ENCODE measurements at regions of chr2 and their contacts with region 1.

Region 1: GRCh38 chr2:85538486-85539360 is at the start of gene MAT2A:
- DNase-seq: peak; percentile 84 to 99
- H3K4me3 ChIP-seq: peak within 1 kb of the TSS; percentile 87 to 100 (median 98)
- H3K27ac ChIP-seq: peak within 1 kb of the TSS; percentile 100
- H3K4me1 ChIP-seq: peaks cover 2 to 7% (median 5%) of the 10 kb centered on the region in 4 experiments; a peak in 4 of 7 replicates
- H3K27me3 ChIP-seq: no peaks in the 10 kb centered on the region
- CTCF ChIP-seq: peak; percentile 70 to 87 (median 76)
- EP300 ChIP-seq: peak in 1 of 2 experiments; percentile 95; a peak in 2 of 3 replicates
- POLR2A ChIP-seq: peak; percentile 99
- RAD21 ChIP-seq: peak; percentile 47 to 63; a peak in 3 of 4 replicates
- total RNA-seq, gene MAT2A: 297 and 307 TPM in 2 replicates

Region 2: DNA sequence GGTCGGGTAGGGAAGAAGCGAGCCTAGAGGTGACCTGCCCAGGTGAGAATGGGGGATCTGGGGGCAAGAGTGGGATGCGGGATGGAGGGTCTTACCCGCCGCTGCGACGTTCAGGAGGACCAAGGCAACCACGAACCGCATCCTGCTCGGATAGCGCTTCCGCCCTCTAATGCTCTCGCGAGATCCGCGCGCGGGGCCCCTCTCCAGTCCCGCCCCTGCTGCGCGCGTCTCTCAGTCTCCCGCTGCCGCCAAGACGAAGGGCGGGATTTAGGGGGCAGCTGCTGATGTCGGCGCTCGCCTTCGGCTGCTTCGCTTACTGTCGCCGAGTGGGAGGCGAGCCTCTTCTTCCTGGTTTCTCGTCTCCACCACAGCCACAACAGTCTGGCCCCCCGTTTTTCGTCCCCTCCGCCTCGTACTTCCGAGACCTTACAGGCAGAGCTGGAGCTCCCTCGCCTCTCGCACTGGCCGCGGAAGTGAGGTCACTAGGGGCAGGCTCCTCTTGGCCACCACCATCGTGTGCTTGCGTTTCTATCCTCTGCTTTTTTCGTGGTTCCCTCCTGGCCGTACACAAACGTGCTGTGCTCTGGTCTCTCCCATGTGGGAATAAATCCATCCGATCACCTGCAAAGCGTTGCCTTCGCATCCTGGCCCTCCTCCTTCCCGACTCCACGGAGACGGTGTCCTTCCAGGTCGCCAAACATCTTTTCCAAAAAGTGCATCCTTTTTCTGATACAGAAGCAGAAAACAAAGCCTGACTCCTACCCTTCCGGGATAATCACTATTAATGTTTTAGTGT is 210.7 kb before region 1 on chr2 and contains the start of gene TGOLN2:
- CTCF ChIA-PET with region 1: no interaction called
- POLR2A ChIA-PET with region 1: interaction called, 23 read pairs
- DNase-seq: peak; percentile 58 to 94
- H3K4me3 ChIP-seq: peak within 1 kb of the TSS; percentile 61 to 96 (median 84)
- H3K27ac ChIP-seq: peak within 1 kb of the TSS; percentile 99
- H3K4me1 ChIP-seq: peaks cover 0 to 13% (median 7%) of the 10 kb centered on the region in 4 experiments; a peak in 6 of 7 replicates
- H3K27me3 ChIP-seq: no peaks in the 10 kb centered on the region; a peak in 1 of 7 replicates
- CTCF ChIP-seq: peak in 1 of 3 experiments; percentile 8; a peak in 2 of 4 replicates
- EP300 ChIP-seq: no peak
- POLR2A ChIP-seq: peak; percentile 99 to 100
- RAD21 ChIP-seq: no peak; a peak in 1 of 4 replicates
- total RNA-seq, gene TGOLN2: 36.3 and 38.9 TPM in 2 replicates

Region 3: GRCh38 chr2:85420536-85421259 is 118.0 kb before region 1 on chr2:
- CTCF ChIA-PET with region 1: interaction called, 84 read pairs
- POLR2A ChIA-PET with region 1: interaction called, 1,889 read pairs
- DNase-seq: peak in 1 of 2 experiments; percentile 100
- H3K4me3 ChIP-seq: no peak overlapping the region
- H3K27ac ChIP-seq: no peak overlapping the region
- H3K4me1 ChIP-seq: peaks cover 0 to 20% (median 13%) of the 10 kb centered on the region in 4 experiments; a peak in 6 of 7 replicates
- H3K27me3 ChIP-seq: no peaks in the 10 kb centered on the region; a peak in 1 of 7 replicates
- CTCF ChIP-seq: peak; percentile 96 to 100 (median 98)
- EP300 ChIP-seq: peak in 1 of 2 experiments; percentile 24; a peak in 1 of 3 replicates
- POLR2A ChIP-seq: no peak
- RAD21 ChIP-seq: peak; percentile 99 to 100

Region 4: GRCh38 chr2:85475799-85476490 is 62.8 kb before region 1 on chr2:
- CTCF ChIA-PET with region 1: interaction called, 4 read pairs
- POLR2A ChIA-PET with region 1: interaction called, 51 read pairs
- DNase-seq: no peak
- H3K4me3 ChIP-seq: no peak overlapping the region
- H3K27ac ChIP-seq: 0 out of 2 replicates have a peak overlapping the region, but pooled peaks have one; percentile 8
- H3K4me1 ChIP-seq: no peaks in the 10 kb centered on the region
- H3K27me3 ChIP-seq: no peaks in the 10 kb centered on the region
- CTCF ChIP-seq: no peak
- EP300 ChIP-seq: no peak
- POLR2A ChIP-seq: no peak
- RAD21 ChIP-seq: no peak

Region 5: DNA sequence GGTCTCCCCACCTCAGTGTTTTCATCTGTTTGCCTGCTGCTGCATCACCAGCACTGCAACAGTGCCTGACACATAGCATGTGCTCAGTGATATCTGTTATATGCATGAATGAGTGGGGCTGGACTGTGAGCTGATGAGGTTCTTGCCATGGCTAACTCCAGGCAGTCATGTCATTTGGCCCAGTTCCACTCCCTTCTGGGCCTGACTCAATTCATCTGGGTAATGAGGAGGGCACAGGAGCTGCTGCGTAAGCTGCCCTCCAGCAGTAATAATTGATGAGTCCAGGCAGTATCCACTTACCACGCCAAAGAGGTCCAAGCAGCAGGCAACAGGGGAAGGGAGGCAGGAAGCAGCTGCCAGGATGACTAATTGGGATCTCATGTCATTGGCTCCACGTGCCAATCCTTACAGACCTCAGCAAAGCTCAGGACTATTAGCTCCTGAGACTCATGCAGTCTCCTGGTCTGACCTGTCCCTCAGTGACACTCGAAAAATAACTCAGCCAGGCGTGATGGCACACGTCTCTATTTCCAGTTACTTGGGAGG is 33.9 kb before region 1 on chr2:
- CTCF ChIA-PET with region 1: interaction called, 4 read pairs
- POLR2A ChIA-PET with region 1: interaction called, 347 read pairs
- DNase-seq: no peak
- H3K4me3 ChIP-seq: no peak overlapping the region
- H3K27ac ChIP-seq: no peak overlapping the region
- H3K4me1 ChIP-seq: no peaks in the 10 kb centered on the region; a peak in 2 of 7 replicates
- H3K27me3 ChIP-seq: no peaks in the 10 kb centered on the region
- CTCF ChIP-seq: no peak
- EP300 ChIP-seq: no peak
- POLR2A ChIP-seq: no peak
- RAD21 ChIP-seq: no peak

Region 6: DNA sequence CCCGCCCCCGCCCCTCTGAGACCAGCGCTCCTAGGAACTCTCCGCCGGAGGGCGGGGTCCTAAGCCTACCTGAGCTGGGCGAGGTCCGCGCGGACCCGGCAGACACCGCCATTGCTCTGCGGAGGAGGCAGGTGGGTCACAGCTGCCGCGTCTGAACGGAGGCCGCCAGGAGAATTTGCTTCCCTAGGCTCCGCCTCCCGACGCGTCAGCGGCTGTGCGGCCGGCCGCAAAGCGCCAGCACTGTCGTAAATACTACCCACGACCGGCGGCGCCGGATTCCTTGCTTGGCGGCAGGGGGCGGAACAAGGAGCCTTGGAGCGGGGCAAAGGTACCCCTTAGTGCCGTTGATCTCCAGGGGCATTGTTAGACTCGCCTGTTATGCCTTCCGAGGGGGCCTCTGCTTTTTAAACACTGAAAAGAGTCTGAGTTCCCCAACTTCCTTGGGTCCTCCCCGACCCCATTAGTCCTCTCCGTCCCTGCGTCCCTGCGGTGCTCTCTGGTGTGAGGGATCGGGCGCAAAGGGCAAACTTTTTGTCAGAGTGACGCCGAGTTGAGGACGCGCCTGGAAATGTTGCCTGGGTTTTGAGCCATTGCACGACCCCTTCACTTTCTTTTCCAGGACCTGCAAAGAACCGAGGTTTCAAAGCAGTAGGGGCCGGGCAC is 22.7 kb after region 1 on chr2 and contains the start of gene GGCX:
- CTCF ChIA-PET with region 1: interaction called, 5 read pairs
- POLR2A ChIA-PET with region 1: interaction called, 803 read pairs
- DNase-seq: peak; percentile 88 to 97
- H3K4me3 ChIP-seq: peak within 1 kb of the TSS; percentile 68 to 90 (median 88)
- H3K27ac ChIP-seq: peak within 1 kb of the TSS; percentile 92
- H3K4me1 ChIP-seq: no peaks in the 10 kb centered on the region
- H3K27me3 ChIP-seq: no peaks in the 10 kb centered on the region
- CTCF ChIP-seq: no peak
- EP300 ChIP-seq: no peak
- POLR2A ChIP-seq: peak; percentile 95 to 97
- RAD21 ChIP-seq: peak in 1 of 2 experiments; percentile 11; a peak in 1 of 4 replicates
- total RNA-seq, gene GGCX: 33.8 and 36.1 TPM in 2 replicates

Region 7: DNA sequence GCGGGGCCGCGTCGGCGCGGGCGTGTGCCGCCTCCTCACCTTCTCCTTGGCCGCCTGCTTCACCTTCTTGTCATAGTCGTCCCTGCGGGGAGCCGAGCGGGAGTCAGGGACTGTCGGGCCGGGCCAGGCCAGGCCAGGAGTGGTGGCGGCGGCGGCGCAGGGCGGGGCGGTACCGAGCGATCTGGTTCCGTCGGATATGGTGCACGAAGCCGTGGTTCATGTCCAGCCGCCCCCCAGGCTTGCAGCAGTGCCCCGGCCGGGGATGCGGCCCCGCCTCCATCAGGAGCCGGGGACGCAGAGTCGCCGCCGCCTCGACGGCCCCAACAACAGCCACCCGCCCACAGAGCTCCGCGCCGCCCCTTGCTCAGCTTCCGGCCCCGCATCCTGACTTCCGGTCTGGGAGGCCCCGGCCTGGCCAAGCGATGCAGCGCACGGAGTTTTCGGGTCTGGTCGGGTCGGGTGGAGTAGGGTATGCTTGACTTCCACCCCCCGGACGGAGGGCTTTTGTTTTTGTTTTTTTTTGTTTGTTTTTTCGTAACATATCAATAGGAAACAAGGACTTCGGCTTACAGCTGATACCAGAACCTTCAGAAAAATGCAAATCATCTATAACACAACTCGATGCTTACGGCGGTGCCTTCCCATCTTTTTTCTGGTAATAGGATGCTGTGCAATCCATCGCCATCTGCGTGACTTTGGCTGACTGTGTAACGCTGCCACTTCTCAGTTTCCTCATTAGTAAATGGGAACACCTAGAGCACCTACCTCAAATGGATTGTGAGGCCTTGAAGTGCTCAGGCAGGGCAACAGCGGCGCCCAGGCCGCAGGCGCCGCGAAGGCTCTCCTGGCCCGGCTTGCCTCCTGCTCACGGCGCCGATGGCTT is 73.2 kb after region 1 on chr2 and contains the start of gene C2orf68:
- CTCF ChIA-PET with region 1: no interaction called
- POLR2A ChIA-PET with region 1: interaction called, 68 read pairs
- DNase-seq: peak; percentile 70 to 92
- H3K4me3 ChIP-seq: peak within 1 kb of the TSS; percentile 78 to 87 (median 84)
- H3K27ac ChIP-seq: peak within 1 kb of the TSS; percentile 73
- H3K4me1 ChIP-seq: peaks cover 0 to 1% (median under 1%) of the 10 kb centered on the region in 4 experiments; a peak in 4 of 7 replicates
- H3K27me3 ChIP-seq: no peaks in the 10 kb centered on the region
- CTCF ChIP-seq: no peak
- EP300 ChIP-seq: no peak
- POLR2A ChIP-seq: peak; percentile 73 to 84
- RAD21 ChIP-seq: no peak
- total RNA-seq, gene C2orf68: 40.9 and 46.3 TPM in 2 replicates

Region 8: GRCh38 chr2:85648619-85649018 is 109.9 kb after region 1 on chr2:
- CTCF ChIA-PET with region 1: no interaction called
- POLR2A ChIA-PET with region 1: no interaction called
- DNase-seq: no peak
- H3K4me3 ChIP-seq: no peak overlapping the region
- H3K27ac ChIP-seq: no peak overlapping the region
- H3K4me1 ChIP-seq: no peaks in the 10 kb centered on the region
- H3K27me3 ChIP-seq: no peaks in the 10 kb centered on the region
- CTCF ChIP-seq: peak in 2 of 3 experiments; percentile 11 to 25; a peak in 2 of 4 replicates
- EP300 ChIP-seq: no peak
- POLR2A ChIP-seq: no peak
- RAD21 ChIP-seq: peak in 1 of 2 experiments; percentile 14; a peak in 1 of 4 replicates

Region 9: DNA sequence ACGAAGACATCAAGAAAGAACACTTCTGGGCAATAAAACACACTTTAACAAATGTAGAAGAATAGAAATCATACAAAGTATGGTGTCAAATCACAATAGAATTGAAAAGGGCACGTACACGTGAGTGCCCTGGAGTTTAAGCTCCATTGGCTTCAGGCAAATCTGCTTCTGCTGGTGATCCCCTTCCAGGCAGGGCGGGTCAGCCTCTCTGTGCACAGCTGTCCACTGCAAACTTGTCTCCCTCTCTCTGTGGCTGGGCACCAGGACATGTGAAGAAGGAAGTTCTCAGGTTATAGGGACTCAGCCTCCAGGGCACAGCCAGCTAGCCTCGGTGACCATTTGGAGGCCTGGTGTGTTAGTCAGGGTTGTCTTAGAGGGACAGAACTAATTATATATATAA is 284.0 kb after region 1 on chr2:
- CTCF ChIA-PET with region 1: no interaction called
- POLR2A ChIA-PET with region 1: no interaction called
- DNase-seq: no peak
- H3K4me3 ChIP-seq: no peak overlapping the region
- H3K27ac ChIP-seq: no peak overlapping the region
- H3K4me1 ChIP-seq: no peaks in the 10 kb centered on the region; a peak in 2 of 7 replicates
- H3K27me3 ChIP-seq: no peaks in the 10 kb centered on the region
- CTCF ChIP-seq: no peak
- EP300 ChIP-seq: no peak
- POLR2A ChIP-seq: no peak
- RAD21 ChIP-seq: no peak